ENCODE measurements at regions of chr16 and their contacts with region 1.

Region 1: GRCh38 chr16:68093816-68094613 is 8.8 kb downstream of the NFATC3 start:
- DNase-seq: no peak
- ATAC-seq: peak; percentile 85
- H3K4me3 Mint-ChIP-seq: peak overlapping the region; percentile 59
- H3K27ac Mint-ChIP-seq: peak overlapping the region; percentile 80
- H3K4me1 Mint-ChIP-seq: peaks cover 82% of the 10 kb centered on the region
- H3K27me3 Mint-ChIP-seq: no peaks in the 10 kb centered on the region

Region 2: DNA sequence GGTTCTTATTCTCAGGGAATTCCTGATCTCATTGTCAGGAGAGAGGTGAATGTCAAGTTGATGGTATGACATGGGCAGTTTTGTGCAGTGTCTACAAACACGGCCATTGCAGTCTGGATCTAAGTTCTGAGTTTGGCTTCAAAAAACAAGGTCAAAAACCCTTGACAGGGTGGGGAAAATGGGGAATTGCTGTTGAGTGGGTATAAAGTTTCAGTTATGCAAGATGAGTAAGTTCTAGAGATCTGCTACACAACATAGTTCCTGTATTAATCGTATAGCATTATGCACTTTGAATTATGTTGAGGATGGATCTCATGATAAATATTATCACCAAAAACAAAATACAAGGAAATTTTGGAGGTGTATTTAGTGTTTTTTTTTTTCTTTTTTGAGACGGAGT is 485.7 kb before region 1 on chr16:
- CTCF ChIA-PET with region 1: no interaction called
- POLR2A ChIA-PET with region 1: no interaction called
- intact Hi-C with region 1: no loop called
- DNase-seq: no peak
- ATAC-seq: peak; percentile 80
- H3K4me3 Mint-ChIP-seq: no peak overlapping the region
- H3K27ac Mint-ChIP-seq: peak overlapping the region; percentile 85
- H3K4me1 Mint-ChIP-seq: peaks cover 10% of the 10 kb centered on the region
- H3K27me3 Mint-ChIP-seq: no peaks in the 10 kb centered on the region

Region 3: DNA sequence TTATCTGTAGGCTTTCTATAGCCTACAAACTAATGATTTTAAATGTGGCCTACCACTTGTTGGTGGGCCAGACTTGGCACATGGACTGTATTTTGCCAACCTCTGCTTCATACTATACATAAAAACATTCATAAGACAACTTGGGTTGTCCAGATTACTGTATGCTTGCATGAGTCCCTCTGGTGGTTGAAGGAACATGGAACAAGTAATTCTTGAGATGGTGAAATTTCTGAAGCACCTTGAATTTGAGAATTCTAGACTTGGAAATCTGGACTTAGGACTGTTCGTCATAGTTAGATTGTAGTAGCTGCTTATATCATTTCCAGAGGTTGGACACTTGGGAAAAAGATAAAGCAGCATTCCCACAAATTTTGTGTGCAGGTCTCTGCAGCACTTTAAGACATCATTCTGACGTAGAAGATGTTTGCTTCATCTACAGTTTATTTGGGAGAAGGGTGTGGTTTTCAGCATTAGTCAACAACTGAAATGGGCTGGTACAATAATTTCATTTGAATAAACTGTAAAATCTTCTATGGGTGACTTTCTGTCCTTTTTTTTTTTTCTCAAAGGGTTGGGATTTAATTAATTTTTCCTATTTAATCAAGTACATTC is 22.3 kb after region 1 on chr16:
- CTCF ChIA-PET with region 1: interaction called, 56 read pairs
- POLR2A ChIA-PET with region 1: interaction called, 3 read pairs
- intact Hi-C with region 1: loop called (anchors 1 to 2 kb)
- DNase-seq: no peak
- ATAC-seq: peak; percentile 48
- H3K4me3 Mint-ChIP-seq: no peak overlapping the region
- H3K27ac Mint-ChIP-seq: no peak overlapping the region
- H3K4me1 Mint-ChIP-seq: peaks cover 87% of the 10 kb centered on the region
- H3K27me3 Mint-ChIP-seq: no peaks in the 10 kb centered on the region

Region 4: GRCh38 chr16:68131813-68132706 is 38.0 kb after region 1 on chr16:
- CTCF ChIA-PET with region 1: interaction called, 10 read pairs
- POLR2A ChIA-PET with region 1: no interaction called
- intact Hi-C with region 1: loop called in 1 of 2 experiments (anchors 5 kb)
- DNase-seq: no peak
- ATAC-seq: peak; percentile 47
- H3K4me3 Mint-ChIP-seq: peak overlapping the region; percentile 1
- H3K27ac Mint-ChIP-seq: peak overlapping the region; percentile 66
- H3K4me1 Mint-ChIP-seq: peaks cover 49% of the 10 kb centered on the region
- H3K27me3 Mint-ChIP-seq: no peaks in the 10 kb centered on the region

Region 5: GRCh38 chr16:68183046-68183445 is 89.0 kb after region 1 on chr16:
- CTCF ChIA-PET with region 1: no interaction called
- POLR2A ChIA-PET with region 1: no interaction called
- intact Hi-C with region 1: no loop called
- DNase-seq: no peak
- ATAC-seq: no peak
- H3K4me3 Mint-ChIP-seq: no peak overlapping the region
- H3K27ac Mint-ChIP-seq: no peak overlapping the region
- H3K4me1 Mint-ChIP-seq: peaks cover 6% of the 10 kb centered on the region
- H3K27me3 Mint-ChIP-seq: no peaks in the 10 kb centered on the region

Region 6: DNA sequence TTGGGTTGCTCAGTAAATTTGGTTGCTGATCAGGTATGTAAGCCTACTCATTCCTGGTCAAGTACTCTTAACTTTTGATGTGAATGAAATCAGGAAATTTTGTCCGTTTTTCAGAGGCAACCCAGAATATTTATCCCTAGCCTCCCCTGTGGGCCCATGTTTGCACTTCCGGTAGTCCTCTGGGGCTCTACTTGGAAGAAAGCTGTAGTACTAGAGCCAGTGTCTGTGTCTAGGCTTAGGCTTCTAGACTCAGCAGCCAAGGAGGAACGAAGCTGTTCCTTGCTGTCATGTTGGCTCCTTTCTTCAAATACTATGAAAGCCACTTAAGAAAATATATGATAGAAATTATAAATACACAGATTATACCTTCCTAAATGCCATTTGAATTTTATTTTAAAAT is 120.7 kb after region 1 on chr16:
- CTCF ChIA-PET with region 1: interaction called, 5 read pairs
- POLR2A ChIA-PET with region 1: no interaction called
- intact Hi-C with region 1: loop called (anchors 1 to 2 kb)
- DNase-seq: no peak
- ATAC-seq: no peak
- H3K4me3 Mint-ChIP-seq: no peak overlapping the region
- H3K27ac Mint-ChIP-seq: no peak overlapping the region
- H3K4me1 Mint-ChIP-seq: peaks cover 33% of the 10 kb centered on the region
- H3K27me3 Mint-ChIP-seq: no peaks in the 10 kb centered on the region

Region 7: DNA sequence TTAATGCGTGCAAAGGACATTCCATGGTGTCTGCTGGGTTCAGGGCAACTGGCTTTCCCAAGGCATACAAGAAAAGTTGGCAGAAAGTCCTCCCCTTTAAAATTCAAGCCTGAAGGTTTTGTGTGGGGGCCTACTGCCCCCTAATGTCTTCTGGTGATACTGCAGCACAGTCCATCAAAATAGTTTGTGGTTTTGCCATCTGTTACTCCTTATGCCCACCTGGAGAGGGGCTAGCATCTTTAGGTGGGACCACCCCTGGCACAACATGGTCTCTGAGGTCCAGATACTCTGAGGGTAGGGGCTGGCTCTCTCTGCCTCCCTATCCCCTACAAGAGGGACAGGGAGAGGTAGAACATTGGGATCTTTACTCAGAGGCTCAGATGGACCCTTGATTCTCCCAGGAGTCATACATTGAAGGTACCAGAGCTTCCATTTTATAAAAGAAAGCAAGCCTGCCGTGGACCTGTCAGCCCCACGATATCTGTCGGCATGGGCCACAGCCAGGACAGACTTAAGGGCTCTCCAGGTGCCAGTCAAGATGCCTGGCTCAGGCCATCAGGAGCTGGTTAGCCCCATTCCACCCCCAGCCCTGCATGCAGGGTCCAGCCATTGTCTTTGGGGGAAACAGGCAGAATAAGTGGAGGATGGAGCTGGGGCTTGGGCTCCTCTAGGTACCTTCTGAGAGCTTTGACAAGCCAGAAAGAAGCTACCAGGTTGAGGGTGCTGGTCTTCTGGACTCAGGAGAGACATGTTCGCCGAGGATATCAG is 135.6 kb after region 1 on chr16:
- CTCF ChIA-PET with region 1: interaction called, 62 read pairs
- POLR2A ChIA-PET with region 1: no interaction called
- intact Hi-C with region 1: loop called (anchors 1 to 2 kb)
- DNase-seq: peak; percentile 60
- ATAC-seq: no peak
- H3K4me3 Mint-ChIP-seq: no peak overlapping the region
- H3K27ac Mint-ChIP-seq: peak overlapping the region; percentile 48
- H3K4me1 Mint-ChIP-seq: peaks cover 48% of the 10 kb centered on the region
- H3K27me3 Mint-ChIP-seq: no peaks in the 10 kb centered on the region

Region 8: DNA sequence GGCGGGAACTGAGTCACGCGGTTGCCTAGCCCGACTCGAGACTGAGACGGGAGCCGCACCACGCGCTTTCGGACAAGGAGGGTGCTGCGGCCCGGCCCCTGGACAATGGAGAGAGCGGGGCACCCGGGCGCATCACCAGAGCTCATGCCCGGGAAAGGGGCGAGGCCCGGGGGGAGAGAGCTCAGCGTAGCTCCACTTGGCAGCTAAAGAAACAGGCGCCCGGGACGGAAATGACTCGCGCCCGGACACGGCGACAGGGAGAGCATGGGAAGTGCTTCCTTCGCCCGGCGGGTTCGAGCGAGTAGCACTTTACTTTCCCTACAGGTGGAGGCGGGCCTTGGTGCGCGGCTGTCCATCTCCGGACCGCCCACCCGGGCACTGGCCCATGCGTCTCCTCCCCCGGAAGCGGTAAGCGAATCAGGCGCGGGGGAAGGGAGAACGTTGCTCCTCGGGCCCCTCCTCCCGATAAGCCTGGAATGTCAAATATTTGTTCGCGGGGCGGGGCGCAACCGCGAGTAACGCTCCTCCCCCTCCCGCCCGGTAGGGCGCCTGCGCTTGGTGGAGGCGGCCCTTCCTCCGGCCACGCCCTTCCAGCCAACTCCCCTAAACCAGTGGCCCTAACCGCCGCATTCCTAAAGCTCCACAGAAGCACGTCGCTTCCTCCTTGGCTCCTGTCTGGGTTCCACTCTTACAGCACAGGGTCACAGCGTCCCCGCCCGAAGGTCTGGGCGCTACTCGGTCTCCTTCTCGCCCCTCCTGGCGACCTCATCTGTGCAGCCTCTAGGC is 143.4 kb after region 1 on chr16:
- CTCF ChIA-PET with region 1: interaction called, 13 read pairs
- POLR2A ChIA-PET with region 1: no interaction called
- intact Hi-C with region 1: no loop called
- DNase-seq: peak; percentile 96
- ATAC-seq: peak; percentile 79
- H3K4me3 Mint-ChIP-seq: peak overlapping the region; percentile 83
- H3K27ac Mint-ChIP-seq: peak overlapping the region; percentile 86
- H3K4me1 Mint-ChIP-seq: peaks cover 40% of the 10 kb centered on the region
- H3K27me3 Mint-ChIP-seq: no peaks in the 10 kb centered on the region

Region 9: GRCh38 chr16:68328151-68328859 is 234.3 kb after region 1 on chr16:
- CTCF ChIA-PET with region 1: interaction called, 4 read pairs
- POLR2A ChIA-PET with region 1: no interaction called
- intact Hi-C with region 1: loop called in 1 of 2 experiments (anchors 5 kb)
- DNase-seq: peak; percentile 87
- ATAC-seq: peak; percentile 97
- H3K4me3 Mint-ChIP-seq: no peak overlapping the region
- H3K27ac Mint-ChIP-seq: peak overlapping the region; percentile 40
- H3K4me1 Mint-ChIP-seq: peaks cover 26% of the 10 kb centered on the region
- H3K27me3 Mint-ChIP-seq: no peaks in the 10 kb centered on the region